ENCODE measurements at regions of chr4 and their contacts with region 1.

Region 1: GRCh38 chr4:31045724-31046318 is 325.7 kb downstream of the PCDH7 start:
- DNase-seq: no peak
- H3K4me3 ChIP-seq: no peak overlapping the region
- H3K27ac ChIP-seq: no peak overlapping the region
- H3K4me1 ChIP-seq: no peaks in the 10 kb centered on the region
- H3K27me3 ChIP-seq: no peaks in the 10 kb centered on the region
- CTCF ChIP-seq: peak; percentile 62
- EP300 ChIP-seq: no peak
- RAD21 ChIP-seq: peak; percentile 66

Region 2: GRCh38 chr4:31022702-31023101 is 23.1 kb before region 1 on chr4:
- CTCF ChIA-PET with region 1: interaction called, 16 read pairs
- POLR2A ChIA-PET with region 1: no interaction called
- DNase-seq: no peak
- H3K4me3 ChIP-seq: no peak overlapping the region
- H3K27ac ChIP-seq: no peak overlapping the region
- H3K4me1 ChIP-seq: peaks cover 2 to 3% of the 10 kb centered on the region in 2 experiments; a peak in 3 of 4 replicates
- H3K27me3 ChIP-seq: no peaks in the 10 kb centered on the region
- CTCF ChIP-seq: no peak
- EP300 ChIP-seq: no peak
- RAD21 ChIP-seq: no peak